ENCODE measurements at regions of chr2 and their contacts with region 1.

Region 1: GRCh38 chr2:191566344-191566743 is 111.6 kb upstream of the NABP1 start:
- DNase-seq: peak; percentile 39
- H3K4me3 ChIP-seq: no peak overlapping the region
- CTCF ChIP-seq: peak; percentile 82

Region 2: GRCh38 chr2:191465766-191466420 is 100.5 kb before region 1 on chr2:
- in situ Hi-C with region 1: no loop called
- DNase-seq: no peak
- H3K4me3 ChIP-seq: no peak overlapping the region
- CTCF ChIP-seq: no peak

Region 3: GRCh38 chr2:191611614-191612013 is 45.3 kb after region 1 on chr2:
- in situ Hi-C with region 1: no loop called
- DNase-seq: no peak
- H3K4me3 ChIP-seq: no peak overlapping the region
- CTCF ChIP-seq: no peak

Region 4: GRCh38 chr2:191677646-191678436 is 111.5 kb after region 1 on chr2 and contains the start of gene NABP1:
- in situ Hi-C with region 1: loop called (anchors 5 kb)
- DNase-seq: peak; percentile 93
- H3K4me3 ChIP-seq: peak within 1 kb of the TSS; percentile 78
- CTCF ChIP-seq: no peak

Region 5: DNA sequence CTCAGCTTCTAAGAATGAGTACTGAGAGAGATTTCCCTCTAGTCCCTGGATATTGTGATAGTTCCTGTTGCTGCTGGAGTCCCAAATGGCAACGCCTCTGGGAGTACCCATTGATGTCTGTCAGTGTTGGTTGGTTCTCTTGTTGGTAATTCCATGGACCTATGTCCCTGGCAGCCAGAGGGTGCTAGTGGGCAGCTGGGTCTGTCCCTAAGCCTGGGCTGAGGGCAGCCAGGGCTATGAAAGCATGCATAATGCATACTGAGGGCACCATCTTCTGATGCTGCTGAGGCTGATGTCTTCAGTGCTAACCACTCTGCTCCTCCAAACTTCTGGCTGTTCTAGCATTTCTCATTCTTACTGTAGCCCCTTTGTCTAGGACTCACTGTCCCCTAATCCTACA is 147.5 kb after region 1 on chr2:
- in situ Hi-C with region 1: no loop called
- DNase-seq: no peak
- H3K4me3 ChIP-seq: no peak overlapping the region
- CTCF ChIP-seq: peak; percentile 6

Region 6: DNA sequence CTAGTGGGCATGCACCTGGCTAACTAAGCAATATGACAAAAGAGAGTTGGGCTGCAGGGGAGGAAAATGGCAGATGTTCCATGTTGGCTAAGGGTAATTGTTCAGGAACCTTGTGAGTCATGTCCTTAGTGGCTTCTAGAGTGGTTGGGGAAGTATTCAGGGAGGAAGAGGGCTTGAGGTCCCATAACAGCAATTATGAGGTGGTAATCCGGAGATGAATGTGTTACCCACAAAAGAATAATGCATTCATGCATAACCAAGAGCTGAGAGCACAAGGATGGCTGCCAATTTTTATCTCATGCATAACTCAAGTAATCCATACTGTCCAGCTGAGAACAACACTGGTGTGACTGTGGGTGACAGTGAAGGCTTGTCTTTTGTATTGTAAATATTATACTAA is 585.5 kb after region 1 on chr2:
- in situ Hi-C with region 1: loop called (anchors 10 kb)
- DNase-seq: peak; percentile 82
- H3K4me3 ChIP-seq: no peak overlapping the region
- CTCF ChIP-seq: no peak

Measured in astrocyte of the cerebellum (primary cell).